Panc1 (cell line): ENCODE measurements at regions of chr2 and their contacts with region 1.

Region 1: GRCh38 chr2:60868589-60869273 is 12.6 kb upstream of the REL start:
- DNase-seq: no peak
- ATAC-seq: no peak
- H3K4me3 ChIP-seq: no peak overlapping the region
- H3K27ac ChIP-seq: no peak overlapping the region
- H3K4me1 ChIP-seq: no peaks in the 10 kb centered on the region
- H3K27me3 ChIP-seq: no peaks in the 10 kb centered on the region
- CTCF ChIP-seq: no peak

Region 2: DNA sequence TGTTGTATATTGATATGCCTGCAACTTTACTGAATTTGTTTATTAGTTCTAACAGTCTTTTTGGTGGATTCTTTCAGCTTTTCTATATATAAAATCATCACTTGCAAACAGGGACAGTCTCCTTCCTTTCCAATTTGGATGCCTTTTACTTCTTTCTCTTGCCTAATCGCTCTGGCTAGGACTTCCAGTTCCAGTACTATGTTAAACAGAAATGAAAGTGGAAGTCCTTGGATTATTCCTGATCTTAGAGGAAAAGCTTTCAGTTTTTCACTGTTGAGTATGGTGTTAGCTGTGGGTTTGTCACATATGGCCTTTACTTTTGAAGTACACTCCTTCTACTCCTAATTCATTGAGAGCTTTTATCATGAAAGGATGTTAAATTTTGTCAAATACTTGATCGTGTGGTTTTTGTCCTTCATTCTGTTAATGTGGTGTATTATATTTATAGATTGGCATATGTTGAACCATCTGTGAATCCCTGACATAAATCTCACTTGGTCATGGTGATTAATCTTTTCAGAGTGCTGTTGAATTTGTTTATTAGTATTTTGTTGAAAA is 65.5 kb after region 1 on chr2:
- CTCF ChIA-PET with region 1: no interaction called
- POLR2A ChIA-PET with region 1: no interaction called
- in situ Hi-C with region 1: no loop called
- intact Hi-C with region 1: no loop called
- DNase-seq: no peak
- ATAC-seq: no peak
- H3K4me3 ChIP-seq: no peak overlapping the region
- H3K27ac ChIP-seq: no peak overlapping the region
- H3K4me1 ChIP-seq: no peaks in the 10 kb centered on the region
- H3K27me3 ChIP-seq: no peaks in the 10 kb centered on the region
- CTCF ChIP-seq: no peak

Region 3: DNA sequence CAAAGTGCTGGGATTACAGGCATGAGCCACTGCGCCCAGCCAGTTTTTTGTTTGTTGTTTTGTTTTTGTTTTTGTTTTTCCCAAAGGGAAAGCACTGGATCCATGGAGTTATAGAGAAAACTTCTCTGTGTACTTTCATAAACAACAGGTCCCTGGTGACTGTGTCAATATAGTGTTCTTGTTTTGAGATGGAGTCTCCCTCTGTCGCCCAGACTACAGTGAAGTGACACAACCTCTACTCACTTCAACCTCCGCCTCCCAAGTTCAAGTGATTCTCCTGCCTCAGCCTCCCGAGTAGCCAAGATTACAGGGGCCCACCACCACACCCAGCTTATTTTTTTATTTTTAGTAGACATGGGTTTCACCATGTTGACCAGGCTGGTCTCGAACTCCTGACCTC is 585.7 kb after region 1 on chr2:
- CTCF ChIA-PET with region 1: no interaction called
- POLR2A ChIA-PET with region 1: interaction called, 12 read pairs
- in situ Hi-C with region 1: no loop called
- intact Hi-C with region 1: no loop called
- DNase-seq: no peak
- ATAC-seq: no peak
- H3K4me3 ChIP-seq: no peak overlapping the region
- H3K27ac ChIP-seq: no peak overlapping the region
- H3K4me1 ChIP-seq: no peaks in the 10 kb centered on the region; the same call in 1 of the 2 replicates
- H3K27me3 ChIP-seq: no peaks in the 10 kb centered on the region
- CTCF ChIP-seq: no peak